Motor neuron (in vitro differentiated cells): ENCODE measurements at regions of chr6 and their contacts with region 1.

Region 1: GRCh38 chr6:5053038-5053437 is 32.1 kb upstream of the PPP1R3G start:
- ATAC-seq: no peak
- H3K4me3 ChIP-seq: no peak overlapping the region
- H3K27ac ChIP-seq: no peak overlapping the region
- H3K4me1 ChIP-seq: no peaks in the 10 kb centered on the region

Region 2: DNA sequence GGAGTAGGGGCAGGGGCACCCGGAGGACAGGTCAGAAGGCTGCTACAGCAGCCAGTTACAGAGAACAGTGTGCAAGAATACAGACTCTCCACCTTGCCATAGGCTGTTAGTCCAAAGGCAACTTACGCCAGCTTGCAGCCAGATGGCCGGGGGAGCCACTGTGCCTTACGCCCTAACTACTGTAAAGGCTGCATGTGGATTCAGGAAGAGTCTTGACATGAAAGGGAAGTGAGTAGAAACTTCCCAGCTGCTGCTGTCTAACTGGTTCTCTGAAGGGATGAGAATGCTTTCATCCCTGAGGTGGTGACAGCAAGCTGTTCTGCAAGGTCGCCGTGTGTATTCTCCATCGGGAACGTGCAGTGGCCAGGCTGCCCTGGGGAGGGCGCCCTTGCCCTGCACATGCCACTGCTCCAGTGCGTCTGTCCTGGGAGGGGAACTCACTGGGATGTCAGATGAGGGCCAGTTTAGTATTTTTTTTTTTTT is 161.6 kb after region 1 on chr6:
- in situ Hi-C with region 1: loop called in 1 of 9 experiments (anchors 25 kb)
- ATAC-seq: peak; percentile 84 to 98 (median 94)
- H3K4me3 ChIP-seq: no peak overlapping the region
- H3K27ac ChIP-seq: no peak overlapping the region
- H3K4me1 ChIP-seq: peaks cover 3 to 6% of the 10 kb centered on the region in 2 donors